Activated CD4-positive, alpha-beta T cell treated with anti-CD3 and anti-CD28 coated beads for 36 hours (primary cell): ENCODE measurements at regions of chr2 and their contacts with region 1.

Region 1: GRCh38 chr2:64523666-64524603 is at the start of gene AFTPH:
- DNase-seq: peak; percentile 100
- ATAC-seq: peak; percentile 93
- H3K4me3 Mint-ChIP-seq: peak within 1 kb of the TSS; percentile 95
- H3K27ac Mint-ChIP-seq: peak within 1 kb of the TSS; percentile 100
- H3K4me1 Mint-ChIP-seq: peaks cover 30% of the 10 kb centered on the region
- H3K27me3 Mint-ChIP-seq: no peaks in the 10 kb centered on the region
- total RNA-seq, gene AFTPH: 32.3 to 35.2 TPM

Region 2: GRCh38 chr2:64036034-64036705 is 487.8 kb before region 1 on chr2:
- CTCF ChIA-PET with region 1: no interaction called
- POLR2A ChIA-PET with region 1: no interaction called
- intact Hi-C with region 1: loop called in 1 of 2 experiments (anchors 1 kb)
- DNase-seq: peak; percentile 24
- ATAC-seq: peak; percentile 88
- H3K4me3 Mint-ChIP-seq: peak overlapping the region; percentile 40
- H3K27ac Mint-ChIP-seq: peak overlapping the region; percentile 64
- H3K4me1 Mint-ChIP-seq: peaks cover 55% of the 10 kb centered on the region
- H3K27me3 Mint-ChIP-seq: peaks cover 2% of the 10 kb centered on the region

Region 3: GRCh38 chr2:64311948-64312621 is 211.8 kb before region 1 on chr2:
- CTCF ChIA-PET with region 1: no interaction called
- POLR2A ChIA-PET with region 1: no interaction called
- intact Hi-C with region 1: no loop called
- DNase-seq: peak; percentile 10
- ATAC-seq: no peak
- H3K4me3 Mint-ChIP-seq: no peak overlapping the region
- H3K27ac Mint-ChIP-seq: no peak overlapping the region
- H3K4me1 Mint-ChIP-seq: no peaks in the 10 kb centered on the region
- H3K27me3 Mint-ChIP-seq: no peaks in the 10 kb centered on the region

Region 4: DNA sequence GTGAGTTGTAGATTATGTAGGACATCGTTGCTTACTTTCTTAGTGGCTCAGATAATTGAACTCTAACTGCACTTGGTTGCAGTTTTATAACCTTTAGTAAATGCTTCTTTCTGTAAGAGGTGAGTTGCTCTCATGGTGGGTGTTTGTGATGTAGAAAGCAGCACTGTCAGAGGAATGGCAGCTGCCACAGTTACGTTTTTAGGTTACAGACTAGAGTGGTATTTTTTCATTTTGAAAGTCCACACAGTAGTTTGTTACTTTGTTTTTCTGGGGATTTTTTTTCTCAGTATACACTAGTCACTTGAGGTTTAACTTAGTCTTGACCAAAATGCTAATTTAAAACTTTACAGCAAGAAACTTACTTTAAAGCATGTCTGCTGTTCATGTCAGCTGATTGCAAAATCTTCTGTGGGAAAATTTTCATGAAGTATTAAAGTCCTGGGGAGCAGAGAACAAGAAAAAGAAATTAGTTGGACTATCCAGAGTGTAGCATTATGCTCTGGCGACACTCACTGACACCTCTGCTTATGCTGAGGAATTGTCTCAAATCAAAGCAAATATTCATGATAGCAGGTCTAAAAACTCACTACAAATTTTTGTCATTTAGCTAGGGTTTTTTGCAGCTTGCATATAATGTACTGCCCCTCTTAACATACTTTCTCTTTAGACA is 15.0 kb after region 1 on chr2:
- CTCF ChIA-PET with region 1: interaction called, 36 read pairs
- POLR2A ChIA-PET with region 1: no interaction called
- intact Hi-C with region 1: loop called in 1 of 2 experiments (anchors 1 kb)
- DNase-seq: peak; percentile 34
- ATAC-seq: peak; percentile 76
- H3K4me3 Mint-ChIP-seq: no peak overlapping the region
- H3K27ac Mint-ChIP-seq: peak overlapping the region; percentile 66
- H3K4me1 Mint-ChIP-seq: peaks cover 76% of the 10 kb centered on the region
- H3K27me3 Mint-ChIP-seq: no peaks in the 10 kb centered on the region

Region 5: GRCh38 chr2:64644177-64645004 is 120.5 kb after region 1 on chr2:
- CTCF ChIA-PET with region 1: interaction called, 7 read pairs
- POLR2A ChIA-PET with region 1: interaction called, 7 read pairs
- intact Hi-C with region 1: loop called in 1 of 2 experiments (anchors 2 kb)
- DNase-seq: peak; percentile 72
- ATAC-seq: peak; percentile 73
- H3K4me3 Mint-ChIP-seq: peak overlapping the region; percentile 74
- H3K27ac Mint-ChIP-seq: peak overlapping the region; percentile 94
- H3K4me1 Mint-ChIP-seq: peaks cover 82% of the 10 kb centered on the region
- H3K27me3 Mint-ChIP-seq: no peaks in the 10 kb centered on the region

Region 6: DNA sequence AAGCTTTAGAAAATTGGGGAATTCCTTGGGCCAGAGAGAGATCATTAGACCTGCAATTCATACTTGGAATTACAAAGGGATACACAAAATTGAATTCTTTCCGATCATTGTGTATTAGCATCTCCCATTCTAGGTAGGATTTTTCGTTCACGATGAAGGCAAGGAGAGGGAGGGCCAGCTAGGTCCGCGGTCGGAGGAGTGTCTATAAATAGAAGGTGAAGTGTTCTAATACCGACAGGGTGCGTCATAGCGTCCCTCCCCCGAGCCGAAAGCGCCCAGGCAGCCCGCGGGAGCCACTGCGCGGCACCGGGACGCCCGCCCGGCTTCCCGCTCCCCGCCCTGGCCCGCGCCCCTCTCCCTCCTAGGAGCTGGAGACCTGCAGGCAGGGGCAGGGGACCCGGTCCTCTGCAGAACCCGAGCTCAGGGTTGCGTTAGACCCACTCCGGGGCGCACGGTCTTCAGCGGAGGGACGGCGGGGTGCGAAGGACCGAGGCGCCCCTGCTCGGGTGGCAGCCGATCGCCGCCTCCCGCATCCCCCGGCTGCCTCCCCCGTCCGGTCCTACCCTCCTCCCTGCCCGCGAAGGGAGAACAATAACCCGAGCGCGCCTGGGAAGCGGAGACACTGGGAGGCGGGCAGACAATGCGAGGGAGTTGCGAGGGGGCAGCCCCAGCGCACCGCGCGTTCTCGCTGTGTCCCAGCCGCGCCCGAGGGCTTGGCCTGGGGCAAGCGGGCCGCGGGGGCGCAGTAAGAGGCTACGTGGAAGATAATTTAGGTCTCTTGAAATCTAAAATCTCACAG is 243.9 kb after region 1 on chr2:
- CTCF ChIA-PET with region 1: no interaction called
- POLR2A ChIA-PET with region 1: no interaction called
- intact Hi-C with region 1: loop called (anchors 1 to 5 kb)
- DNase-seq: peak; percentile 86
- ATAC-seq: peak; percentile 84
- H3K4me3 Mint-ChIP-seq: peak overlapping the region; percentile 71
- H3K27ac Mint-ChIP-seq: peak overlapping the region; percentile 80
- H3K4me1 Mint-ChIP-seq: peaks cover 25% of the 10 kb centered on the region
- H3K27me3 Mint-ChIP-seq: peaks cover 2% of the 10 kb centered on the region

Region 7: GRCh38 chr2:64914735-64915509 is 391.0 kb after region 1 on chr2:
- CTCF ChIA-PET with region 1: interaction called, 6 read pairs
- POLR2A ChIA-PET with region 1: no interaction called
- intact Hi-C with region 1: loop called in 1 of 2 experiments (anchors 5 kb)
- DNase-seq: no peak
- ATAC-seq: no peak
- H3K4me3 Mint-ChIP-seq: no peak overlapping the region
- H3K27ac Mint-ChIP-seq: no peak overlapping the region
- H3K4me1 Mint-ChIP-seq: peaks cover 19% of the 10 kb centered on the region
- H3K27me3 Mint-ChIP-seq: no peaks in the 10 kb centered on the region

Region 8: DNA sequence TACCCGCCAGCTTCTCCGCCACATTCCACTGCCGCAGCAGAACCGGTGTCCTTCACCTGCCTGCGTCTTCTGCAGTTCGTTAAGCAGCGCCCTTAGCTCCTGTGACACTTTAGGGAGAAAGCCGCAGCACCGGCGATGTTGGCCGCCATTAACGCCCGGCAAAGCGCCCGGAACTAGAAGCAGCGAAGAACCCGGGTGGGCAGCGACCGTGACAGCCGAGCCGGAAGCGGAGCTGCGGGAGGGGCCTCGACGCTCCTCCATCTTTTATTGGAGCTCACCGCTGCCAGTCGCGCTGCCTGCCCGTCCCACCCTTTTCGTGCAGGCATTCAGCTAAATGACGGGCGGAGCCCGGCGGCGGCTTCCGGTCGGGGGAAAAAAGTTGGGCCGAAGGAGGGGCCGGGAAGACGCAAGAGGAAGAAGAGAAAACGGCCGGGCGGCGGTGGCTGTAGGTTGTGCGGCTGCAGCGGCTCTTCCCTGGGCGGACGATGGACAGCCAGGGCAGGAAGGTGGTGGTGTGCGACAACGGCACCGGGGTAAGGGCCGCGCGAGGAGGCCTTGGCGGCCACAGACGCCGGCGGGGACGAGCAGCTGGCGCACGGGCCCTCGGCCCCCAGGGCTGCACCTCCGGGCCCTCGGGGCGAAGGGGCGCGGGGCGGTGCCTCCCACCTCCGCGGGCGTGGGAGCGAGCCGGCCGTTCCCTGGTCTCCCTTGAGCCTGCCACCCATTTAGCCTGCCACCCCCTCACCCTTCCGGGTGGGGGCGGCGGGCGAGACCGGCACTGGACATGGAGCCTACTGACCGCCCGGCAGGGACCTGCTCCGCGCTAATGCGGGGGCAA is 703.7 kb after region 1 on chr2 and contains the start of gene ACTR2:
- CTCF ChIA-PET with region 1: no interaction called
- POLR2A ChIA-PET with region 1: no interaction called
- intact Hi-C with region 1: loop called (anchors 1 to 5 kb)
- DNase-seq: peak; percentile 97
- ATAC-seq: peak; percentile 96
- H3K4me3 Mint-ChIP-seq: peak within 1 kb of the TSS; percentile 95
- H3K27ac Mint-ChIP-seq: peak within 1 kb of the TSS; percentile 98
- H3K4me1 Mint-ChIP-seq: peaks cover 30% of the 10 kb centered on the region
- H3K27me3 Mint-ChIP-seq: no peaks in the 10 kb centered on the region
- total RNA-seq, gene ACTR2: 326 to 388 TPM